Activated B cell treated with CpG ODN at 0.5 μM for 24 hours (primary cell): ENCODE measurements at regions of chr16 and their contacts with region 1.

Region 1: GRCh38 chr16:72609933-72610332 is 438.0 kb upstream of the PMFBP1 start:
- DNase-seq: no peak
- ATAC-seq: no peak
- H3K4me3 Mint-ChIP-seq: no peak overlapping the region
- H3K27ac Mint-ChIP-seq: no peak overlapping the region
- H3K4me1 Mint-ChIP-seq: peaks cover 13% of the 10 kb centered on the region
- H3K27me3 Mint-ChIP-seq: no peaks in the 10 kb centered on the region
- CTCF ChIP-seq: no peak

Region 2: DNA sequence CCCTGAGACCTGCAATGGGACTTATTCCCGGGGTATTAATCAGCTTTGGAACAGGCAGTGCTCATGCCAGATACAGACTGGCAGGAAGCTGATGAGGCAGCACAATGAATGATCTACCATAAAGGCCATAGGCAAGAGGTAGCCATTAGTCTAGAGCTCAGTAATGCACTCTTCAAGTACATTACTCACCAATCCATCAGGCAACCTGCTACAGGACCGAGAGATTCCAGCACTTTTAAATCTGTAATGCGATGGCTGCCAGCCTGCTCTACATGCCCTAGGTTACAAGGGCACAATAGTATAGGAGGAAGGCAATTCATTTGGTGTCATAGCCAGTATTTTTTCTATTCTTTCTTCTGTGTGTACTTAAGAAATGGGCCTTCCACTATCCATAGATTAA is 220.1 kb before region 1 on chr16:
- CTCF ChIA-PET with region 1: no interaction called
- POLR2A ChIA-PET with region 1: no interaction called
- intact Hi-C with region 1: no loop called
- DNase-seq: no peak
- ATAC-seq: no peak
- H3K4me3 Mint-ChIP-seq: no peak overlapping the region
- H3K27ac Mint-ChIP-seq: no peak overlapping the region
- H3K4me1 Mint-ChIP-seq: no peaks in the 10 kb centered on the region
- H3K27me3 Mint-ChIP-seq: no peaks in the 10 kb centered on the region
- CTCF ChIP-seq: no peak

Region 3: GRCh38 chr16:72568502-72568901 is 41.4 kb before region 1 on chr16:
- CTCF ChIA-PET with region 1: no interaction called
- POLR2A ChIA-PET with region 1: no interaction called
- intact Hi-C with region 1: no loop called
- DNase-seq: no peak
- ATAC-seq: no peak
- H3K4me3 Mint-ChIP-seq: no peak overlapping the region
- H3K27ac Mint-ChIP-seq: no peak overlapping the region
- H3K4me1 Mint-ChIP-seq: peaks cover 4% of the 10 kb centered on the region
- H3K27me3 Mint-ChIP-seq: no peaks in the 10 kb centered on the region
- CTCF ChIP-seq: no peak

Region 4: GRCh38 chr16:72657791-72658190 is 47.9 kb after region 1 on chr16:
- CTCF ChIA-PET with region 1: no interaction called
- POLR2A ChIA-PET with region 1: no interaction called
- intact Hi-C with region 1: loop called (anchors 5 kb)
- DNase-seq: no peak
- ATAC-seq: peak; percentile 53
- H3K4me3 Mint-ChIP-seq: no peak overlapping the region
- H3K27ac Mint-ChIP-seq: peak overlapping the region; percentile 84
- H3K4me1 Mint-ChIP-seq: peaks cover 25% of the 10 kb centered on the region
- H3K27me3 Mint-ChIP-seq: no peaks in the 10 kb centered on the region
- CTCF ChIP-seq: no peak

Region 5: DNA sequence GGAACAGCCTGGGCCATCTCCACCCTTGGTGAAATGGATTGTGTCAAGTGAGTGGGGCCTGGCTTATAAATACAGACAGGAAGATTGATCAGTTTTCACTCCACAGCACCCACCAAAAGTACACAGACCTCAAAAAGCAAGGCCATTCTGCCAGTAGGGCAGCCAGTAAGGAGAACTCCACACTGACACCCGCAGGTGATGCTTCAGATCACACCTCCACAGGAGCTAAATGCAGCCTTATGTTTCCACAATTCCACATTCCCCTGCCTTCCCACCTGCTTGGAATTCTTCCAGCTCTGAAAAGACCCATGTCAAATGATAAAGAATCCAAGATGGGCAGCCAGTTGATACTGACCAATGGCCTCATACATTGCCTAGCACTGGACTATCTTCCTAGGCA is 246.9 kb after region 1 on chr16:
- CTCF ChIA-PET with region 1: no interaction called
- POLR2A ChIA-PET with region 1: no interaction called
- intact Hi-C with region 1: no loop called
- DNase-seq: no peak
- ATAC-seq: no peak
- H3K4me3 Mint-ChIP-seq: no peak overlapping the region
- H3K27ac Mint-ChIP-seq: no peak overlapping the region
- H3K4me1 Mint-ChIP-seq: peaks cover 14% of the 10 kb centered on the region
- H3K27me3 Mint-ChIP-seq: no peaks in the 10 kb centered on the region
- CTCF ChIP-seq: no peak